ENCODE measurements at regions of chr16 and their contacts with region 1.

Region 1: GRCh38 chr16:46830902-46831647 is at the start of gene C16orf87:
- DNase-seq: peak; percentile 88
- H3K4me3 ChIP-seq: peak within 1 kb of the TSS; percentile 80 to 96 (median 81)
- H3K27ac ChIP-seq: peak within 1 kb of the TSS; percentile 82
- H3K4me1 ChIP-seq: peaks cover 8% of the 10 kb centered on the region
- H3K27me3 ChIP-seq: no peaks in the 10 kb centered on the region
- CTCF ChIP-seq: no peak
- total RNA-seq, gene C16orf87: 8.0 to 12.3 TPM

Region 2: GRCh38 chr16:46621006-46621933 is 209.8 kb before region 1 on chr16 and contains the start of gene SHCBP1:
- CTCF ChIA-PET with region 1: interaction called, 22 read pairs
- dilution Hi-C with region 1: no loop called
- in situ Hi-C with region 1: no loop called
- intact Hi-C with region 1: no loop called
- DNase-seq: peak; percentile 80
- H3K4me3 ChIP-seq: peak within 1 kb of the TSS; percentile 74 to 88 (median 84)
- H3K27ac ChIP-seq: peak within 1 kb of the TSS; percentile 80
- H3K4me1 ChIP-seq: peaks cover 8% of the 10 kb centered on the region
- H3K27me3 ChIP-seq: no peaks in the 10 kb centered on the region
- CTCF ChIP-seq: no peak
- total RNA-seq, gene SHCBP1: 2.3 to 21.8 TPM

Region 3: DNA sequence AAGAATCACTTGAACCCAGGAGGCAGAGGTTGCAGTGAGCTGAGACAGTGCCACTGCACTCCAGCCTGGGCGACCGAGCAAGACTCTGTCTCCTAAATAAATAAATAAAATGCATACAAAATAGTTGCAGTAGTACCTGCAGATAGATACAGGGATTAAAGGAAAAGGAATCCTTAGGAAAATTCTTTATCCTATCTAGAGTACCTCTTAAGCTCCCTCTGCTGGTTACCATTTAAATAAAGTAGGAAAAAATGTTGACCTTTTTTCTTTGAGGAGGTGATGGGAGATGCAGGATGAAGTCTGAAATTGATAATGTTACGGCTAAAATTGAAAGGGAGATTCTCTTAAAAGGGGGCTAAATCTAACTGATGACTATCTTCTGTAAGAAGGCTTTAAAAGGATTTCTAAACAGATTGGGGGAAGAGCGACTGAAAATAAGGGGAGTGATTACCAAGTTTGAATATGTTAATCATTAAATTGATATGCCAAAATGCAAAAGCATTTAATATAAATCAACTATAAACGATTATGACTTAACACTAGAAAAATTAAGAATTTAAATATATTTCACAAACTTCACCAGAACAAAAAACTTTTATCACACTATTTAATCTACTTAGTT is 29.5 kb before region 1 on chr16:
- CTCF ChIA-PET with region 1: no interaction called
- dilution Hi-C with region 1: no loop called
- in situ Hi-C with region 1: no loop called
- intact Hi-C with region 1: no loop called
- DNase-seq: no peak
- H3K4me3 ChIP-seq: no peak overlapping the region
- H3K27ac ChIP-seq: no peak overlapping the region
- H3K4me1 ChIP-seq: no peaks in the 10 kb centered on the region
- H3K27me3 ChIP-seq: no peaks in the 10 kb centered on the region
- CTCF ChIP-seq: peak; percentile 20 to 51

Region 4: GRCh38 chr16:46932802-46933201 is 101.7 kb after region 1 on chr16:
- CTCF ChIA-PET with region 1: no interaction called
- dilution Hi-C with region 1: no loop called
- in situ Hi-C with region 1: no loop called
- intact Hi-C with region 1: no loop called
- DNase-seq: no peak
- H3K4me3 ChIP-seq: no peak overlapping the region
- H3K27ac ChIP-seq: no peak overlapping the region
- H3K4me1 ChIP-seq: no peaks in the 10 kb centered on the region
- H3K27me3 ChIP-seq: no peaks in the 10 kb centered on the region
- CTCF ChIP-seq: no peak